A673 (cell line): ENCODE measurements at regions of chr7 and their contacts with region 1.

Region 1: DNA sequence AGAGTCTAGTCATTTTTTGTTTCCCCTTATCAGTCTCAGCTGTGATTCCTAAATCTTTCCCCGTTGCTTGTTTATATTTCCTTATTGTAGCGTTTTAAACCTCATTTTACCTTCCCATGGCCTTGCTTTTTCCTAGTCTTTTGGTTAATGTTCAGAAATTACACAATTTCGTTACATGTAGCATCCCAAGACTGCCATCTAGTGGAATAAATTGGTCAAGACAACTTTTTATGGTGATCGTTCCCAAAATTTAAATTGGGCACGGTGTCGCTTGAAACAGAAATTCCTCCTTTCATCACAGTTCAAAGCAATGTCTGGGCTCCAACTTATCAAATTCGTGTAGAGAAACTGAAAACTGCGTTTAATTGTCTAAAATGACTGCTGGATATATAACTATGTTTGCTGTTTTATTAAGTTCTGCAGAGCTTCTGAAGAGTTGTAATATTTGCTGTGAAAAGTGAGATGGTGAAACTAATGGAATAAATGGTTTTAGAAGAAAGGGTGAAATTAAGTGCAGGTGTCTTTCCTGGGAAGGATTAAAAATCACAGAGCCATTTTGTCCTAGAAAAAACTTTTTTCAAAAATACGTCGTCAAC is 370.2 kb downstream of the PHF14 start:
- DNase-seq: peak; percentile 68
- H3K4me3 ChIP-seq: no peak overlapping the region
- H3K27ac ChIP-seq: no peak overlapping the region
- H3K4me1 ChIP-seq: no peaks in the 10 kb centered on the region
- H3K27me3 ChIP-seq: no peaks in the 10 kb centered on the region
- CTCF ChIP-seq: peak; percentile 76

Region 2: DNA sequence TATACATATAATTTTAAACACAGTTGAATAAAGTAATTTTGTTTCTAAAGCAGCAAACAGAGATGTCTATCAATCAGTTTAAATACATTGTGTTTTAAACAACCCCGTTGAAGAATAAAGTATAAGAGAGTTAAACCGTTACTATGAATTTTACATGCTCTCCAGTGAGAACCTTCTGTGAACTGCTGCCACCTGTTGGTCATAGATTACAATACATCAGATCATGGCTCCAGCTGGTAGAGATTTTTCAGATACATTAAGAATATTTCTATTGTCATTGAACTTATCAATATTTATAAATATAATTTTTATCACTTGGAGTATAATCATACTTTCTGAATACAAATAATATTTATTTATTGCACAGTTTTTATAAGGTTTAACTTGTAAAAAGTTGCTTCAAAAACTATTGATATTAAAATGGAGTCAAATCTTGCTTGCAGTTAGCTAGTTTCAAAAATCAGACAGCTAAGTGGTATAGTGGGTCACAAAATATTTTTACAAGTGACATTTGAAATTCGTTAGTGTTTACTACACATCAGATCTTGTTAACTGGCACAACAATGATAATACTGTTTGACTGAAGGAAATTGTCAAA is 931.4 kb before region 1 on chr7:
- CTCF ChIA-PET with region 1: no interaction called
- POLR2A ChIA-PET with region 1: no interaction called
- intact Hi-C with region 1: loop called (anchors 10 kb)
- DNase-seq: peak; percentile 54
- H3K4me3 ChIP-seq: no peak overlapping the region
- H3K27ac ChIP-seq: no peak overlapping the region
- H3K4me1 ChIP-seq: no peaks in the 10 kb centered on the region
- H3K27me3 ChIP-seq: no peaks in the 10 kb centered on the region
- CTCF ChIP-seq: peak; percentile 69

Region 3: DNA sequence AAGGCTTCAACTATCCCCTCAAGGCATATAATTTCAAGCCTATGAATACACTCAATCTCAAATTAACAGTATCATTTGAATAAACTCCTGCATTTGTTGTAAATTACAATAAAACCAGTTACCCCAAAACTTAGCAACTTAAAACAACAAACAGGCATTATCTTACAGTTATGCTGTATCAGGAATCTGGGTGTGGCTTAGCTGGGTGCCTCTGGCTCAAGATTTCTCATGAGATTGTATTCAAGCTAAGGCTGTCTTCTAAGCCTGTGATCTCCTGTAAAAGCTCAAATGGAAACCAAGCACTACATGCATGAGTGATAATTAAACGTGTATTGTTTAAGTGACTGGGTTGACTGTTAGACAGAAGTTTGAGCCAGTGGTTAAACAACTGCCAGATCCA is 711.2 kb before region 1 on chr7:
- CTCF ChIA-PET with region 1: no interaction called
- POLR2A ChIA-PET with region 1: no interaction called
- intact Hi-C with region 1: loop called (anchors 10 kb)
- DNase-seq: no peak
- H3K4me3 ChIP-seq: no peak overlapping the region
- H3K27ac ChIP-seq: no peak overlapping the region
- H3K4me1 ChIP-seq: no peaks in the 10 kb centered on the region
- H3K27me3 ChIP-seq: no peaks in the 10 kb centered on the region
- CTCF ChIP-seq: no peak

Region 4: GRCh38 chr7:10939911-10940703 is 403.8 kb before region 1 on chr7:
- CTCF ChIA-PET with region 1: no interaction called
- POLR2A ChIA-PET with region 1: no interaction called
- intact Hi-C with region 1: loop called (anchors 10 kb)
- DNase-seq: peak; percentile 96
- H3K4me3 ChIP-seq: peak overlapping the region; percentile 60
- H3K27ac ChIP-seq: peak overlapping the region; percentile 96
- H3K4me1 ChIP-seq: peaks cover 20% of the 10 kb centered on the region
- H3K27me3 ChIP-seq: no peaks in the 10 kb centered on the region
- CTCF ChIP-seq: no peak

Region 5: DNA sequence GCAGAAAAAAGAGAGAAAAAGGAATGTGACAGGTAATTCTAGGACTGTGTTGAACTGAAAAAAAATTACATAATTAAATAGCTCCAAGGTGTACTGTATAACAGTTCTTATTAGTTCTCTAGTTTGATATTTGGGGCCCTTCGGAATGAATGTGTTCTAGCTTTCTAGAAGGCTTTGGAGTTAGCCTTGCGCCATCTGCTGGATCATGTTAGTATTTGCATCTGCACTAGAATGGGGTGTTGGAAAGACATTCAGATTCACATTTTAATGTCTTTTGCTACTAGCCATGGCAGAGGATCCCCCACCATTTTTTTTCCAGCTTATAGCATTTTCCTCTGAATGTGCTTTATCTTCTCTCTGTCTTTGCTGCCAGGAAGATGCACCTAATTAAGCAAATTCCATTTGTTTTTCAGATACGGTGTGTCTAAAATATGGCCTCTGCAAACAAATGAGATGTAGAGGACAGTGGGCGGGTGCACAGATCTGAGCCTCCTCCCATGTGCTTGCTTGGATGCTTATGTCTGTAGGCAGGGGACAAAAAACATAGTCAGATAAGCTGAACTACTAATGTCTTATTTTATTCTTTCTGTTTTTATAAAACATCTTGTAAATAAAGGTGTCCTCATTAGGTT is 131.7 kb before region 1 on chr7:
- CTCF ChIA-PET with region 1: no interaction called
- POLR2A ChIA-PET with region 1: no interaction called
- intact Hi-C with region 1: loop called (anchors 5 kb)
- DNase-seq: peak; percentile 84
- H3K4me3 ChIP-seq: no peak overlapping the region
- H3K27ac ChIP-seq: no peak overlapping the region
- H3K4me1 ChIP-seq: peaks cover 15% of the 10 kb centered on the region
- H3K27me3 ChIP-seq: no peaks in the 10 kb centered on the region
- CTCF ChIP-seq: peak; percentile 90